Naive thymus-derived CD4-positive, alpha-beta T cell (primary cell): ENCODE measurements at regions of chr15 and their contacts with region 1.

Region 1: GRCh38 chr15:75347222-75347878 is 511 bp downstream of the NEIL1 start:
- DNase-seq: peak; percentile 35 to 75 (median 69)
- ATAC-seq: peak; percentile 73
- H3K4me3 ChIP-seq: peak overlapping the region; percentile 59
- H3K4me3 Mint-ChIP-seq: peak overlapping the region; percentile 78 to 95 (median 90)
- H3K27ac ChIP-seq: peak overlapping the region; percentile 66
- H3K27ac Mint-ChIP-seq: peak overlapping the region; percentile 78 to 95 (median 89)
- H3K4me1 ChIP-seq: peaks cover 29 to 30% of the 10 kb centered on the region in 2 donors
- H3K4me1 Mint-ChIP-seq: peaks cover 21 to 45% (median 31%) of the 10 kb centered on the region in 7 donors
- H3K27me3 ChIP-seq: no peaks in the 10 kb centered on the region
- H3K27me3 Mint-ChIP-seq: peaks cover 0 to 26% (median 0%) of the 10 kb centered on the region in 5 donors

Region 2: GRCh38 chr15:74307827-74308644 is 1039.3 kb before region 1 on chr15:
- CTCF ChIA-PET with region 1: no interaction called
- POLR2A ChIA-PET with region 1: no interaction called
- intact Hi-C with region 1: no loop called
- DNase-seq: peak in 2 of 9 donors; percentile 18 to 28
- ATAC-seq: peak; percentile 64
- H3K4me3 ChIP-seq: no peak overlapping the region
- H3K4me3 Mint-ChIP-seq: no peak overlapping the region
- H3K27ac ChIP-seq: no peak overlapping the region
- H3K27ac Mint-ChIP-seq: no peak overlapping the region
- H3K4me1 ChIP-seq: no peaks in the 10 kb centered on the region
- H3K4me1 Mint-ChIP-seq: peaks cover 0 to 1% (median 0%) of the 10 kb centered on the region in 7 donors
- H3K27me3 ChIP-seq: no peaks in the 10 kb centered on the region
- H3K27me3 Mint-ChIP-seq: peaks cover 17 to 31% (median 25%) of the 10 kb centered on the region in 5 donors

Region 3: GRCh38 chr15:75335705-75336355 is 11.5 kb before region 1 on chr15 and contains the start of gene COMMD4:
- CTCF ChIA-PET with region 1: no interaction called
- POLR2A ChIA-PET with region 1: interaction called, 11 read pairs
- intact Hi-C with region 1: loop called in 1 of 2 experiments (anchors 1 kb)
- DNase-seq: peak; percentile 36 to 88 (median 50)
- ATAC-seq: peak; percentile 78
- H3K4me3 ChIP-seq: peak within 1 kb of the TSS; percentile 77
- H3K4me3 Mint-ChIP-seq: peak within 1 kb of the TSS; percentile 84 to 97 (median 90)
- H3K27ac ChIP-seq: peak within 1 kb of the TSS; percentile 70
- H3K27ac Mint-ChIP-seq: peak within 1 kb of the TSS; percentile 72 to 95 (median 86)
- H3K4me1 ChIP-seq: peaks cover 7 to 11% of the 10 kb centered on the region in 2 donors
- H3K4me1 Mint-ChIP-seq: peaks cover 15 to 27% (median 18%) of the 10 kb centered on the region in 7 donors
- H3K27me3 ChIP-seq: no peaks in the 10 kb centered on the region
- H3K27me3 Mint-ChIP-seq: peaks cover 0 to 6% (median 0%) of the 10 kb centered on the region in 5 donors
- total RNA-seq, gene COMMD4: 23.4 to 84.2 (median 26.3) TPM